GM23248 (cell line): ENCODE measurements at regions of chr5 and their contacts with region 1.

Region 1: DNA sequence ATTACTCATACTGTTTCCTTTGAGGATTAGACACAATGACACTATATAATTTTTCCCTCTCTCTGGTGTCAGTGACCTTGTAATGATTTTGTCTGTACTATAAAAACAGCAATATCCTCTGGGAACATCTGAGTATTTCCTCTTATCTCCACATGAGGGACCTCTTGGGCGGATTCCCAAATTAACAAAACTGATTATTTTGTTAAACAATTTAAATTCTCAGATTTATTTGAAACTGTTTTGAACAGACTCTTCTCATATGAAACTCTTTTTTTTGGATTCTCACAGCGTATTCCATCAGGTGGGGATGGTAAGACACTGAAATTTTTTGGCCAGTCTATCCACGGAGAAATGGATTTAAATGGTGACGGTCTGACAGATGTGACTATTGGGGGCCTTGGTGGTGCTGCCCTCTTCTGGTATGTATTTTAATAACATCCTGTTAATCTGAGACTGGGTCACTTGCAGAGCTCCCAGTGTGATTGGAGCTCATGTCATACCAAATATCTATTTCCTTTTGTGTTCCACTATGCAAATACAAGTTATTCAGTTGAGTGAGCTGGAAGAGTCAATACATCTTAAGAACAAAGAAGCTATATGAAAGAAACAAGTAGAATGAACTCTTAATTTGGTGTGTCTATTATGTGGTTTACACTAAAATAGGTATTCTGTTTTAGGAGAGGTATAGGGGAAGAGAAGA is 73.8 kb upstream of the ITGA2 start:
- DNase-seq: peak; percentile 79
- H3K4me3 ChIP-seq: peak overlapping the region; percentile 74
- H3K27ac ChIP-seq: no peak overlapping the region
- H3K4me1 ChIP-seq: no peaks in the 10 kb centered on the region
- H3K27me3 ChIP-seq: no peaks in the 10 kb centered on the region

Region 2: GRCh38 chr5:52632281-52632680 is 283.0 kb before region 1 on chr5:
- in situ Hi-C with region 1: no loop called
- DNase-seq: no peak
- H3K4me3 ChIP-seq: no peak overlapping the region
- H3K27ac ChIP-seq: no peak overlapping the region
- H3K4me1 ChIP-seq: no peaks in the 10 kb centered on the region
- H3K27me3 ChIP-seq: no peaks in the 10 kb centered on the region

Region 3: DNA sequence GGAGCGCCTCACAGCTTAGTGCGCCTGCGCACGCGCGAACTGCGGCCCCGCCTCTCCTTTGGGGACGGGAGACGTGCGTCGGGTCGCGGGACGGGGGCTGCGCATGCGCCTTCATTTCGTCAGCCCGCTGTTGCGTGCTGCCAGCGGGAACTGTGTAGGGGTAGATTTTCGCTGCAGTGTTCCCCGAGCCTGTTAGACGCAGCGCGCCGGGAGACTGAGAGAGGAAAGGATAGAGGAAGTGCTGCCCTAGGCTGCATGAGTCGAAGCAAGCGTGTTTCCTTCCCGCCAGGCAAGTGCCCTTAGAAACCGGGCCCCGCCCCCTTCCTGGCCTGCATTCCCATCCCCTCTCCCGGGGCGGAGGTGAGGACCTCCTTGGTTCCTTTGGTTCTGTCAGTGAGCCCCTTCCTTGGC is 115.3 kb before region 1 on chr5:
- in situ Hi-C with region 1: loop called (anchors 25 kb)
- DNase-seq: peak; percentile 97
- H3K4me3 ChIP-seq: peak overlapping the region; percentile 87
- H3K27ac ChIP-seq: peak overlapping the region; percentile 99
- H3K4me1 ChIP-seq: peaks cover 30% of the 10 kb centered on the region
- H3K27me3 ChIP-seq: no peaks in the 10 kb centered on the region